ENCODE measurements at regions of chr13 and their contacts with region 1.

Region 1: DNA sequence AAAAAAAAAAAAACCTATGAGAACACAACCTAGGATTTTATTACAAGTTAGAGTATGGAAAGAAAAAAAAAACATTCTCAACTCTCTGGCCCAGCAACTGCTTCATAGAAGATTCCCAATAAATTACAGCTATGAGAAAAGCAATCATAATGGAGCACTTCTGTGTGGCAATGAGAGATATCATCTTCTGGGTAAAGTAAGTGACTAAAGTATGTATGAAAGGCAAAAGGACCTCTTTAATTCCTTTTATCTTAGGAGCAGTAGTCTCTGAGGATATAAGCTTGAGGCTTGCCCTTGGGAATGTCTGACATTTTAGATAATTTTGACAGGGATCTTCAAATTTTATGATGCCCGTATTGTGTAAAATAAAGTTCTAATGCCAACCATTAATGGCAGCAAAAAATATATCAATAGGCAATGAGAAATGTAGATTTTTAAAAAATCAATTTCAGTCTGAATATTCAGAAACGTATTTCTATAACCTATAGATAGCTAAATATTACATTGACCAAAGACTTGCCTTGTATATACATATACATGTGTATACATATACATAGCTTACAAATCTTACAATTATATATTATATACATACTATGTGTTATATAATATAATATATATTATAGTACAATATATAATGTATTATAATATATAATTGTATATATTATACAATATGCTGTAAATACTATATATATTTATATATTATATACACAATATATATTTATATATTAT is 823.9 kb upstream of the SLITRK1 start:
- DNase-seq: no peak
- H3K4me3 ChIP-seq: no peak overlapping the region
- H3K27ac ChIP-seq: no peak overlapping the region
- H3K4me1 ChIP-seq: no peaks in the 10 kb centered on the region
- H3K27me3 ChIP-seq: no peaks in the 10 kb centered on the region
- CTCF ChIP-seq: no peak

Region 2: GRCh38 chr13:84672616-84673015 is 33.5 kb before region 1 on chr13:
- CTCF ChIA-PET with region 1: no interaction called
- POLR2A ChIA-PET with region 1: no interaction called
- intact Hi-C with region 1: loop called (anchors 1 kb)
- DNase-seq: no peak
- H3K4me3 ChIP-seq: no peak overlapping the region
- H3K27ac ChIP-seq: no peak overlapping the region
- H3K4me1 ChIP-seq: no peaks in the 10 kb centered on the region
- H3K27me3 ChIP-seq: no peaks in the 10 kb centered on the region
- CTCF ChIP-seq: no peak

Measured in PC-9 (cell line).